ENCODE measurements at regions of chr20 and their contacts with region 1.

Region 1: DNA sequence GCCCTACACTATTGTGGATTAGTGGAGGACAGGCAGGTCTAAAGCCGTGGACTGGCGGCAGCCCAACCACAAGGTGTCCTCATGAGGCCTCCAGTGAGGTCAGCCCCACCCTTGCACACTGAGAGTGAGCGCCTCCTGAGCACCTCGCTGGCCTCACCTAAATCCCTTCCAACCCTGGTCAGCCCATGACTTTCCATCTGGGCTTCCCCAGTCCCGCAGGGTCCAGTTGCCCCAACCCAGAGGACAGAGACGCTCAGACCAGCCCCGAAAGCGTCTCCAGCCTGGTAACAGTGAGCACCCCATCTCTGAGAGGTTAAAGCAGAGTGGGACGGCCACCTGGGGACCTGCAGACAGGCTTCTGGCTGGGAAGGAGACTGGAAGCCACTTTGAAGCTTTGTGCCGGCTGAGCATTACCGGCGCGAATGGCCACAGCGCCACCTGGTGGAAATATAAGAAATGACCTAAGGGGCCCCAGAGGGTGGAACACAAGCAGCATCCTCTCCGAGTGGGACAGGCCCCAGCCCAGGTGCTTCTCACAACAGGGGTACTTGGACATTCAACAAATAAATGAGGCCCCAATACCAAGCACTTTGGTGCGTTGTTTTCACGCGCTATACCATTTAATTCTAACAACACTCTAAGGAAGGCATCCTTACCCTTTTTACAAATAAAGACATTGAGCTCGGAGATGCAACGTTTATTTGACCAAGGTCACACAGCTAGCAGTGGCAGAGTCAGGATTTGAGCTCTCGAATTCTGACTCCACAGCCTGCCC is 65.7 kb upstream of the TOP1 start:
- DNase-seq: peak in 1 of 2 donors; percentile 75
- H3K4me3 ChIP-seq: no peak overlapping the region
- H3K27ac ChIP-seq: no peak overlapping the region
- H3K4me1 ChIP-seq: no peaks in the 10 kb centered on the region
- H3K27me3 ChIP-seq: no peaks in the 10 kb centered on the region
- CTCF ChIP-seq: peak; percentile 70 to 96 (median 83)

Region 2: DNA sequence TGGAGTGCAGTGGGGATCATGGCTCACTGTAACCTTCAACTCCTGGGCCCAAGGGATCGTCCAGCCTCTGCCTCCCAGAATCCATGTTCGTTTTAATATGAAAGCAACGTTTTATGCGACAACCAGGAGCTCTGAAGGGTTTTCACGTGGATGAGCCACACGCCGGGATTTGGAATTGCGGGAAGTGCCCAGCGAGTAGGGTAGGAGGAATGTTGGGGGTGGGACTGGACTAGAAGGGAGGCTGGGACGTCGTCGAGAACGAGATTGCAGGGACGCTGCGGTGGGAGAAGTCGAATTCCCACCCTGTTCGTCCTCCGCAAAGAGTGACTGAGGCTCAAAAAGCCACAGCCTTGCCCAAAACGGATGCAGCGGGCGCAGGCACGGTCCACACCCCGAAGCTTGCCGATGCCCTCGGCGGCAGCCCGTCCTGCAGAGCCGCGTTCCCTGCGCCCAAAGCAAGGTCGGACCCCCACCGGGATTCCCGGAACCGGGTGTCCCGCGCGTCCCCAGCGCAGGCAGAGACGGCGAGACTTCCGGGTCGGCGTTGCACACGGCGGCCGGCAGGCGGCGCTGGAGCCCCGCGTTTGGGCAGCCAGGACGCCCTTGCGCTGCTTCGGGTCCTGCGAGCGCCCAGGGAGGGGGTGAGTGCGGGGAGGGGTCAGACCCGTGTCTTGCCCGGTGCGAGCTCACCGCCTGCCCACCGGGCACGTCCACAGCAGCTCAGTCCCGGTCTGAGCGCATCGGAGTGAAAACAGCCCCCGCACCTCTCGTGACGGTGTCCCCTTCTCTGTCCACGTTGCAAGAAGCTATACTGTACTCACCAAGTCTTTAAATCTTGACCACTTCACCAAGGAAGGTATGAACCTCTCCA is 1913.0 kb before region 1 on chr20:
- intact Hi-C with region 1: loop called (anchors 5 kb)
- DNase-seq: peak in 1 of 2 donors; percentile 83
- H3K4me3 ChIP-seq: peak overlapping the region; percentile 70 to 81
- H3K27ac ChIP-seq: peak overlapping the region; percentile 60 to 62
- H3K4me1 ChIP-seq: no peaks in the 10 kb centered on the region
- H3K27me3 ChIP-seq: no peaks in the 10 kb centered on the region
- CTCF ChIP-seq: peak; percentile 95 to 99 (median 99)

Region 3: GRCh38 chr20:39885975-39886649 is 1076.8 kb before region 1 on chr20:
- intact Hi-C with region 1: loop called (anchors 10 kb)
- DNase-seq: peak; percentile 14 to 82
- H3K4me3 ChIP-seq: no peak overlapping the region
- H3K27ac ChIP-seq: no peak overlapping the region
- H3K4me1 ChIP-seq: no peaks in the 10 kb centered on the region
- H3K27me3 ChIP-seq: no peaks in the 10 kb centered on the region
- CTCF ChIP-seq: peak in 2 of 3 experiments; percentile 32 to 40

Region 4: GRCh38 chr20:40160097-40160550 is 802.8 kb before region 1 on chr20:
- intact Hi-C with region 1: loop called (anchors 10 kb)
- DNase-seq: peak in 1 of 2 donors; percentile 71
- H3K4me3 ChIP-seq: no peak overlapping the region
- H3K27ac ChIP-seq: no peak overlapping the region
- H3K4me1 ChIP-seq: no peaks in the 10 kb centered on the region
- H3K27me3 ChIP-seq: no peaks in the 10 kb centered on the region
- CTCF ChIP-seq: peak; percentile 40 to 82 (median 61)

Region 5: DNA sequence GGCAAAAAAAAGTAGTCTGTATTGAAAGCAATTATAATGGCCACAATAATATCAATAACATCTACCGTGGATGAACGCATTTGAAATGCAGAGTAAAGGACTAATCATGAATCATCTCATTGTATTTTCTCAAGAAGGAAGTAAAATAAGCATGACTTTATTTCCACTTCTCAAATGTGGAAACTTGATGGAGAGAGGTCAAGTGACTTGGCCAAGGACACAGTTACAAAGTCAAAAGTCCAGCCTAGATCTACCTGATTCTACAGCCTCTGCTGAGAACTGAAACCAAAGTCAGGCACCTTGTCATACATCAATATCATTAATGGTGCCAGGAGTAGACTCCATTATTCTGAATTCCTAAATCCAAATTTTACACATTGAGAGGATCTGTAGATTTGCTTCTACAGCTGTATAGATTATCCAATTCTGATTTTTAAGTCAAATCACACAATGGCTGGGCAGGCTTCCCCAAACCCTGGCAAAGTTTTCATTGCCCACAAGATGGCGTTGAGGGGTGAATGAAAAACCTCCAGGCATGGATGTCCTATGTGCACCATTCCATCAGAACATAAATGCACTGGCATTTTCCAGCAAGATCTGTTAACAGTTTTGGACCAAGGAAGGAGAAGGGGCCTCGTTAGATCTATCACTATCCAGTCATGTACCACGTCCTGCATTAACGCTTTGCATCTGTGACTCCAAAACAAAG is 696.9 kb before region 1 on chr20:
- intact Hi-C with region 1: loop called (anchors 10 kb)
- DNase-seq: no peak
- H3K4me3 ChIP-seq: no peak overlapping the region
- H3K27ac ChIP-seq: no peak overlapping the region
- H3K4me1 ChIP-seq: no peaks in the 10 kb centered on the region
- H3K27me3 ChIP-seq: no peaks in the 10 kb centered on the region
- CTCF ChIP-seq: peak; percentile 33 to 60 (median 44)

Region 6: DNA sequence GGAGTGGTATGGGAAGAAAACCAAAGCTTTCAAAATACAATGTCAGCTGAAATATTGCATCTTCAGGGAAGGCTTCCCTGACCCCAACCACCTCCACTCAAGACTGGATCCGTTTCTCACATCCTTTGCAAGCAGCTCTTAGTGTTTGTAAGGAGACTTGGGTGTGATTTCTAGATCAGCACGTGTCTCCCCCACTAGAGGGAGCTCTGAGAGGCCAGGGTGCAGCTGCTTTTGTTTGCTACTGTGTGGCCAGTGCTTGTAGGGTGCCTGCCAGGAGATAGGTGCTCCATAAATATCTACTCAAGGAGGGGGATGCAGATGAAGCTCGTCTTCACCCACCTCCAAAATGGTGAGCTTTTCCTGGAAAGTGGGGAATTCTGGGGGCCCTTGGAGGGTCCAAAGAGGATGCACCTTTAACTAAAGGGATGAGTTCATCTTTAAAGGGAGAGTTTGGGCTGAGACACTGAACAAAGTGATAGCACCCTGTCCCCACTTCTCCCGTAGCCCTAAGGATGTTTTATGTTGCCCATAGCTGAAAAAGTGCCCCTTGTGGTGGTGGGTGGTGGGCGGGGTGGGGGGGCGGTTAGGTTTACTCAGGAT is 221.3 kb before region 1 on chr20:
- intact Hi-C with region 1: loop called (anchors 1 kb)
- DNase-seq: no peak
- H3K4me3 ChIP-seq: no peak overlapping the region
- H3K27ac ChIP-seq: no peak overlapping the region
- H3K4me1 ChIP-seq: no peaks in the 10 kb centered on the region
- H3K27me3 ChIP-seq: no peaks in the 10 kb centered on the region
- CTCF ChIP-seq: peak in 2 of 3 experiments; percentile 35 to 62

Region 7: GRCh38 chr20:40753472-40753871 is 209.4 kb before region 1 on chr20:
- intact Hi-C with region 1: no loop called
- DNase-seq: no peak
- H3K4me3 ChIP-seq: no peak overlapping the region
- H3K27ac ChIP-seq: peak overlapping the region in 1 of 2 donors; percentile 68
- H3K4me1 ChIP-seq: peaks cover 10 to 28% of the 10 kb centered on the region in 2 donors
- H3K27me3 ChIP-seq: no peaks in the 10 kb centered on the region
- CTCF ChIP-seq: no peak

Region 8: GRCh38 chr20:41095110-41095969 is 132.4 kb after region 1 on chr20:
- intact Hi-C with region 1: loop called (anchors 1 kb)
- DNase-seq: peak in 1 of 2 donors; percentile 73
- H3K4me3 ChIP-seq: no peak overlapping the region
- H3K27ac ChIP-seq: no peak overlapping the region
- H3K4me1 ChIP-seq: no peaks in the 10 kb centered on the region
- H3K27me3 ChIP-seq: no peaks in the 10 kb centered on the region
- CTCF ChIP-seq: peak; percentile 71 to 89 (median 85)

Measured in ascending aorta (tissue), 2 donors.